GM12878 (cell line): ENCODE measurements at regions of chr5 and their contacts with region 1.

Region 1: DNA sequence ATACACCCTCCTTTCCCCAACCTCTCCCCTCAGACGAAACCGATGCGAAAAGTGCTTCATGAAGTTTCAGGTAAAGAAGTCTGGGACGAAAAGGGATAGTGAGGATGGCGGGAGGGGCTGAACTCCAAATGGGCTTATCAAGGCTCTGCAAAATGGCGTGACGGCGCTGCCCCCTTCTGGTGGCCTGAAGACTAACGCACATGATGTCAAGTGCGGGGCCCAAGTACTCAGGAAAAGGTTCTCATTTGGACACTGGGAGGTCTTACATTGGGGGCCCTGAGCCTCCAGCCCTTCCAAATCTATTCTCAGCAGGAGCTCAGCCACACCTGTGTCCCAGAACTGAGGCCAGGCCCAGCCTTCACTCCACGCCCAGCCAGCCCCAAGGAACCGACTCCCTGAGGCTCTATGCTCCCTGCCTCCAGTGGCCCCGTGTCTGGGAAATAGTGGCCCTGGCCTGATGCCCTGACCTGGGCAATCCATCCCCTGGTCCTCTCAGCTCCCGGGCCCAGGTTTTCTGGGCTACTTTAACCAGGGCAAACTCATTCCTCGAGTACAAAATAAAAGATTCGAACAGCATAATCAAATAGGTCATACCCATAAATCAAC is 119.9 kb downstream of the KCNIP1 start:
- DNase-seq: no peak
- ATAC-seq: peak; percentile 85
- H3K4me3 ChIP-seq: no peak overlapping the region
- H3K27ac ChIP-seq: no peak overlapping the region
- H3K4me1 ChIP-seq: no peaks in the 10 kb centered on the region
- H3K27me3 ChIP-seq: no peaks in the 10 kb centered on the region; a peak in 2 of 4 replicates
- CTCF ChIP-seq: peak; percentile 49 to 51 (median 50)
- EP300 ChIP-seq: no peak
- POLR2A ChIP-seq: no peak
- RAD21 ChIP-seq: peak; percentile 59

Region 2: GRCh38 chr5:170466988-170467707 is 156.5 kb before region 1 on chr5:
- CTCF ChIA-PET with region 1: no interaction called
- POLR2A ChIA-PET with region 1: no interaction called
- RAD21 ChIA-PET with region 1: no interaction called
- SMC1A ChIA-PET with region 1: no interaction called
- in situ Hi-C with region 1: no loop called
- intact Hi-C with region 1: no loop called
- DNase-seq: no peak
- ATAC-seq: peak; percentile 59
- H3K4me3 ChIP-seq: no peak overlapping the region
- H3K27ac ChIP-seq: no peak overlapping the region
- H3K4me1 ChIP-seq: no peaks in the 10 kb centered on the region
- H3K27me3 ChIP-seq: no peaks in the 10 kb centered on the region; a peak in 1 of 4 replicates
- CTCF ChIP-seq: no peak
- EP300 ChIP-seq: no peak
- POLR2A ChIP-seq: no peak
- RAD21 ChIP-seq: no peak

Region 3: DNA sequence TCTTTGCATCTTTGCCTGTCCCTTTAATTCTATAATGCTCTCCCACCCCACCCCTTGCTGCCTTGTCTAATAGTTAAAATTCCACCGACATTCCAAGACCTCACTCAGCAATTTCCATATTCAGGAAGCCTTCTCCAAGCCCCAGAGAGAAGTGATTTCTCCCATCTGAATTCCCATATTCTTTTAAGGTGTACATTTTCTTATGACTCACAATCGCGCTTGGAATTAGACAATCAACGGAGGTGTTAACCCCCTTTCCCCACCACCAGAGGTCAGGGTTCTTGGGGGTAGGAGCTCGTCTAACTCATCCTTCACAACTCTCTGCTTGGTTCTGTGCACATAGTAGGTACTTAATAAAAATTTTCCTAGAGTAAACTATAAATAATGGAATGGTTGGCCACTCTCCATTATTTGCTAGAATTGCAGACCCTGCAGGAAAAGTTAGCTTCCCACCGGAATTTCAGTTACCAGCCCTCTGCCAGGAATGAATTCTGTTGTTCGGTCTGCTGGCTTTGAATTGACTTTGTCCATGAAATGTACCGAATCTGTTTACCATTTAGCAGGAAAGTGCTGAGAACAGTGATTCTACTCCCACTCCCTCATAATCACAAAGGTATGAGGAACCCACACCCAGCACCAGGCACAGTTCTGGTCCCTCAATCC is 114.9 kb before region 1 on chr5:
- CTCF ChIA-PET with region 1: no interaction called
- POLR2A ChIA-PET with region 1: no interaction called
- RAD21 ChIA-PET with region 1: no interaction called
- SMC1A ChIA-PET with region 1: no interaction called
- in situ Hi-C with region 1: no loop called
- intact Hi-C with region 1: loop called (anchors 5 kb)
- DNase-seq: no peak
- ATAC-seq: no peak
- H3K4me3 ChIP-seq: no peak overlapping the region
- H3K27ac ChIP-seq: no peak overlapping the region
- H3K4me1 ChIP-seq: no peaks in the 10 kb centered on the region
- H3K27me3 ChIP-seq: peaks cover 12 to 15% of the 10 kb centered on the region in 2 experiments
- CTCF ChIP-seq: no peak
- EP300 ChIP-seq: no peak
- POLR2A ChIP-seq: no peak
- RAD21 ChIP-seq: no peak